CD14-positive monocyte (primary cell): ENCODE measurements at regions of chr4 and their contacts with region 1.

Region 1: GRCh38 chr4:139177868-139178611 is 1.0 kb upstream of the ELF2 start:
- DNase-seq: peak; percentile 88 to 93 (median 88)
- H3K4me3 ChIP-seq: peak overlapping the region; percentile 83 to 97 (median 96)
- H3K4me3 Mint-ChIP-seq: peak overlapping the region; percentile 90 to 94
- H3K27ac ChIP-seq: peak overlapping the region; percentile 96 to 97
- H3K27ac Mint-ChIP-seq: peak overlapping the region; percentile 93 to 99 (median 96)
- H3K4me1 ChIP-seq: peaks cover 15 to 29% of the 10 kb centered on the region in 2 donors
- H3K4me1 Mint-ChIP-seq: peaks cover 28% of the 10 kb centered on the region
- H3K27me3 ChIP-seq: no peaks in the 10 kb centered on the region
- H3K27me3 Mint-ChIP-seq: peaks cover 0 to 2% (median 1%) of the 10 kb centered on the region in 3 donors
- CTCF ChIP-seq: no peak

Region 2: DNA sequence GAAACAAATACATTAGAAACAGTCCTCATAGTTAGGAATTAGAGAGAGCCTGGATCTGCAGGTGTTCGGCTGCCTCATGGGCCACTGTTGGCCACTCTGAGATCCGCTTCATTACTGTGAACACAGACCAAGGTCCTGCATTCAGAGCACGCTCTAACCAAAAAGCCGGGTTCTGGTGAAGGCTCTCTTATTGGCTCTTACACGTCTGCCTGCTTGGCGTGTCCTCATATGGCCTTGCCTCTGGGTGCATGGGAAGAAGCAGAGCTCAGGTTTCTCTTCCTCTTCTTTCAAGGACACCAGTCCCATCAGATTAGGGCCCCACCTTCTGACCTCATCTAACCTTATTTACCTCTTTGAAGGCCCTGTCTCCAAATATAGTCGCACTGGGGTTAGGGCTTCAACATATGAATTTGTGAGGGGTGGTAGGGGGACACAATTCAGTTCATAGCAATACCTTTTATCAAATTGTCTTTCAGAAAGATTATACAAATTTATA is 36.0 kb after region 1 on chr4:
- intact Hi-C with region 1: loop called in 1 of 2 experiments (anchors 5 kb)
- DNase-seq: peak; percentile 80 to 93 (median 90)
- H3K4me3 ChIP-seq: peak overlapping the region in 1 of 3 experiments; percentile 10
- H3K4me3 Mint-ChIP-seq: peak overlapping the region in 1 of 2 donors; percentile 7
- H3K27ac ChIP-seq: peak overlapping the region; percentile 71 to 80
- H3K27ac Mint-ChIP-seq: peak overlapping the region; percentile 75 to 95 (median 92)
- H3K4me1 ChIP-seq: peaks cover 35 to 46% of the 10 kb centered on the region in 2 donors
- H3K4me1 Mint-ChIP-seq: peaks cover 31% of the 10 kb centered on the region
- H3K27me3 ChIP-seq: no peaks in the 10 kb centered on the region
- H3K27me3 Mint-ChIP-seq: peaks cover 0 to 1% (median 0%) of the 10 kb centered on the region in 3 donors
- CTCF ChIP-seq: no peak

Region 3: GRCh38 chr4:139229534-139230039 is 51.5 kb after region 1 on chr4:
- intact Hi-C with region 1: loop called in 1 of 2 experiments (anchors 10 kb)
- DNase-seq: peak; percentile 21 to 52 (median 51)
- H3K4me3 ChIP-seq: no peak overlapping the region
- H3K4me3 Mint-ChIP-seq: no peak overlapping the region
- H3K27ac ChIP-seq: no peak overlapping the region
- H3K27ac Mint-ChIP-seq: no peak overlapping the region
- H3K4me1 ChIP-seq: peaks cover 2 to 5% of the 10 kb centered on the region in 2 donors
- H3K4me1 Mint-ChIP-seq: peaks cover 13% of the 10 kb centered on the region
- H3K27me3 ChIP-seq: no peaks in the 10 kb centered on the region
- H3K27me3 Mint-ChIP-seq: peaks cover 0 to 2% (median 1%) of the 10 kb centered on the region in 3 donors
- CTCF ChIP-seq: peak; percentile 83

Region 4: DNA sequence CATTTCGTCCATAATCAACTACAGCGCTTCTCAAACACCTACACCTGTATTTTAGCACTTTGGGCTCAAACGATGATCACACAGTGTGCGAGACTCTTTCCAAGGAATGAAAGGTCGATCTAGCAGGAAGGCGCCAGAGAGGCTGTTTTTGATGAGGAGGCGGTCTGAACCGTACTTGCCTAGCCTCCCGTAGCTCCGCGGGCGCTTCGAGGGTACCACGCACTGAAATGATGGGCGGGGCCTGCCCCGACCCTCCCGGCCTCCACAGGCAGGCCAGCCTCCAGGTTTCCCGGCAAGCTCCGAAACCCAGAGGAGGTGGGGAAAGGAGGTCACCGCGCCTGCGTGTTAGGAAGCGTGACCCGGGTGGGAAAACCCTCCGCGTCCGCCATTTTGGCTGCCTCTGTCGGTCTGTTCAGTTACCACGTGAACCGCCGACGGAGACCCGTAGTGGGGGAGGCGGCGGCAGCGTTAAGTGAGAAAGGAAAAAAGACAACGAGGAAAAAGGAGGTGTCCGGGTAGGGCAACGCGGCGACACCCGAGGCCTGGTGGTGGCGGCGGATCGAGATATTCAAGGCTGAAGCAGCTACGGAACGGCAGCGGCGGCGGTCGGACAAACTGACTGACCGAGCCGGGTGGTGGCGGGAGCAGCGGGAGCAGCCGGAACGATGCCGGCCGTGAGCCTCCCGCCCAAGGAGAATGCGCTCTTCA is 123.2 kb after region 1 on chr4 and contains the start of gene NAA15:
- intact Hi-C with region 1: loop called (anchors 5 kb)
- DNase-seq: peak; percentile 93 to 96 (median 94)
- H3K4me3 ChIP-seq: peak within 1 kb of the TSS; percentile 72 to 94 (median 75)
- H3K4me3 Mint-ChIP-seq: peak within 1 kb of the TSS; percentile 99 to 100
- H3K27ac ChIP-seq: peak within 1 kb of the TSS; percentile 89 to 95
- H3K27ac Mint-ChIP-seq: peak within 1 kb of the TSS; percentile 97 to 100 (median 99)
- H3K4me1 ChIP-seq: peaks cover 20 to 48% of the 10 kb centered on the region in 2 donors
- H3K4me1 Mint-ChIP-seq: peaks cover 45% of the 10 kb centered on the region
- H3K27me3 ChIP-seq: no peaks in the 10 kb centered on the region
- H3K27me3 Mint-ChIP-seq: no peaks in the 10 kb centered on the region
- CTCF ChIP-seq: no peak
- polyA plus RNA-seq, gene NAA15: 5.2 to 20.2 (median 8.8) TPM